ENCODE measurements at regions of chr1 and their contacts with region 1.

Region 1: DNA sequence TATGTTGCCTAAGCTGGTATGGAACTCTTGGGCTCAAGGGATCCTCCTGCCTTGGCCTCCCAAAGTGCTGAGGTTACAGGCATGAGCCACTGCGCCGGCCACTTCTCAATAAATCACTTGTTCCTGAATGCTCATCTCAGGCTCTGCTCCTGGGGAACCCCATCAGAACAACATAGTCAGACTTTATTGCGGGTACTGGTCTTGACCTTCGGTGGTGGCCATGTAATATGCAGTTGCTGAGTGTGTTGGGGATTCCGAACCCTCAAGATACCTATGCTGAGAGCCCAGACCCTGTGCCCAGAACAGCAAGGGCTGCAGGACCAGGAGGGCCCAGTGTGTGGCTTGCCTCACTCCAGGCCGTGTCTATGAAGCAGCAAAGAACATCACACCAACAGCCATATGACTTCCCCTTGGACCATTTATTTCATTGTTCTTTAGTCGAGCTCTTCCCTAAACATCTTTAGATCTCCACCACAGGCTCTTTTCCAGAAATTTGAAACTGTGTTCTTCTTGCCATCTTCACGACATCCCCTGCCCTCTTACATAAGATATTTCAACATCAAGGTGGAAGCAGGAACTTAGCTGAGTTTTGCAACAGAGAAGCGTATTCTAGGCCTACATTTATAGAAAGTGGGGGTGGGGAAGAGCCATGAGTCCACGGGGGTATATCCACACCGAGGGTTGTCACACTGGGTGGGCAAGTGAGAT is 12.7 kb upstream of the SDHB start:
- DNase-seq: no peak
- H3K4me3 ChIP-seq: no peak overlapping the region
- H3K27ac ChIP-seq: no peak overlapping the region
- H3K4me1 ChIP-seq: peaks cover 3% of the 10 kb centered on the region
- H3K27me3 ChIP-seq: no peaks in the 10 kb centered on the region
- CTCF ChIP-seq: no peak

Region 2: DNA sequence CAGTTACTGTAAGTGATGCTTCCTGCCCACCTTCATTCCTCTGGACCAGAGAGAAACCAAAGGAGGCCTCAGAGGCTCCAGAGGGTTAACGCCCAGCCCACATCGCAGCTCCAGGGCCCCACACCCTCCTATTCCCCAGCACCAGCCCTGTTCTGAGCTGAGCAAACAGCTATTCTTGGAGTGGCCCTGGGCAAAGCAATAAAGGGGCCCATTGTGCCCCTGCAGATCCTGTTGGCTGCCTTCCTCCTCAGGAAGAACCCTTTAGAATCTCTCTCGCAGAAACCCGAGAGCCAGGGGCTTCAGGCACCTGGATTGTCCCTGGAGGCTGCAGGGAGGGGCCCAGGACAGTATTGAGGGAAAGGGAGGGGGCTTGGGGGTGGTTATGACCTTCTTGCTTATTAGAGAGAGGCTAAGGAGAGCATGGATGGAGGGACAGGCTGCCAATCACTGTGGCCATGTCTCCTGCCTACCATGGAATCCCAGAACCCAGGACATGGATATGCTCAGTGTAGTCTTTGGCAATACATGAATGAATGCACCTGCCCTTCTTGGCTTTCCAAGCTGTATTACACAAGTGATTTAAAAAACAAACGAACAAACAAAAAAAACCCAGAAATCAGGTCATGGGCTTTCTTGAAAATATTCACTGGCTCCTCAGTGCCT is 43.5 kb after region 1 on chr1:
- CTCF ChIA-PET with region 1: no interaction called
- dilution Hi-C with region 1: loop called (anchors 5 kb)
- in situ Hi-C with region 1: no loop called
- intact Hi-C with region 1: no loop called
- DNase-seq: no peak
- H3K4me3 ChIP-seq: no peak overlapping the region
- H3K27ac ChIP-seq: no peak overlapping the region
- H3K4me1 ChIP-seq: peaks cover 13% of the 10 kb centered on the region
- H3K27me3 ChIP-seq: no peaks in the 10 kb centered on the region
- CTCF ChIP-seq: no peak

Region 3: GRCh38 chr1:17274186-17275170 is 208.0 kb after region 1 on chr1:
- CTCF ChIA-PET with region 1: no interaction called
- dilution Hi-C with region 1: no loop called
- in situ Hi-C with region 1: no loop called
- intact Hi-C with region 1: no loop called
- DNase-seq: peak; percentile 39
- H3K4me3 ChIP-seq: no peak overlapping the region
- H3K27ac ChIP-seq: no peak overlapping the region
- H3K4me1 ChIP-seq: peaks cover 10% of the 10 kb centered on the region
- H3K27me3 ChIP-seq: no peaks in the 10 kb centered on the region
- CTCF ChIP-seq: peak; percentile 63 to 77

Region 4: DNA sequence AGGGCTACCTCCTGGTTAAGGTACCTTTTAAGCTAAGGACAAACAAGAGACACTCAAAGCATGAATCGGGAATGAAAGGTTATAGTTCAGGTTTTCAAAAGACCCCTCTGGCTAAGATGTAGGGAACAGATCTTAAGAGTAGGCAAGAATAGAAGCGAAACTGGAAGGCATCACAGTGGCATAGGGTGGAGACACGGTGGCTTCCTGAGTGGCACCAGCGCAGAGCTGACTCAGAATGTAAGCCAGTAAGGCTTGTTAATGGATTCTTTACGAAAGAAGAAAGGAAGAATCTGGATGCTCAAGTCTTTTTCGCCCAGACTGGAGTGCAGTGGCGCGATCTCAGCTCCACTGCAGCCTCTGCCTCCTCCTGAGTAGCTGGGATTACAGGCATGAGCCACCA is 326.7 kb after region 1 on chr1:
- CTCF ChIA-PET with region 1: no interaction called
- dilution Hi-C with region 1: loop called (anchors 5 kb)
- in situ Hi-C with region 1: no loop called
- intact Hi-C with region 1: no loop called
- DNase-seq: no peak
- H3K4me3 ChIP-seq: no peak overlapping the region
- H3K27ac ChIP-seq: no peak overlapping the region
- H3K4me1 ChIP-seq: no peaks in the 10 kb centered on the region
- H3K27me3 ChIP-seq: no peaks in the 10 kb centered on the region
- CTCF ChIP-seq: no peak

Region 5: GRCh38 chr1:17551755-17552234 is 485.3 kb after region 1 on chr1:
- CTCF ChIA-PET with region 1: no interaction called
- dilution Hi-C with region 1: no loop called
- in situ Hi-C with region 1: no loop called
- intact Hi-C with region 1: no loop called
- DNase-seq: no peak
- H3K4me3 ChIP-seq: no peak overlapping the region
- H3K27ac ChIP-seq: no peak overlapping the region
- H3K4me1 ChIP-seq: peaks cover 19% of the 10 kb centered on the region
- H3K27me3 ChIP-seq: no peaks in the 10 kb centered on the region
- CTCF ChIP-seq: no peak